Heart right ventricle (tissue), 16 donors: ENCODE measurements at regions of chr7 and their contacts with region 1.

Region 1: DNA sequence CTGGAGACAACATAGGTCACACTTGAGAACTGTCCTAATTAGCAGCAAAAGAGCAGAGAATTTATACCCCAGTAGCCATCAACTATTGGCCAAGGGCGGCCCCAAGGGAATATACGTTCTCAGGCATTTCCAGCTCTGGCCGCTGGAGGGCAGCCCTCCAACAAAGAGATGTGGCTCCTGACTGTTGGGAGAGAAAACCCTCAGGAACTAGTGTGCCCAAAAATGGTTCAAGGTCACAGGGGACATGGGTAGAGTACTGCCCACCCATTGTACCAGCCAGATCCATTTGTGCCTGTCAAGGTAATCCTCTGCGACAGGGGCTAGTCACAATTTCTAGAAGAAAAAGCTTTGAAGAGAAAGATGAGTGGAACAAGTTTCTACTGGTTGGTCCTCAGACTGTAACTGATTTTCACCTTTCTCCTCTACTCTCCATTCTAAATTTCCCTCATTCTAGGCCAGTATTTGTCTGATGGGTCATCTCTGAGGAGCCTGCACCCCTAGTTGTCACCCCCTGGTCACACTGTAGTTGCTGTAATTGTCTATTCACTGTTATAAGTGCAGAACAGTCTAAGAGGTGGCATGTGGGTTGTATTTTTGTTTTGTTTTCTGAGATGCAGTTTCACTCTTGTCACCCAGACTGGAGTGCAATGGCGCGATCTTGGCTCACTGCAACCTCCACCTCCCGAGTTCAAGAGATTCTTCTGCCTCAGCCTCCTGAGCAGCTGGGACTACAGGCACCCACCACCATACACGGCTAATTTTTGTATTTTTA is 14.7 kb upstream of the C7orf33 start:
- DNase-seq: peak; percentile 47 to 63
- ATAC-seq: peak; percentile 55 to 81 (median 71)
- H3K4me3 ChIP-seq: no peak overlapping the region
- H3K27ac ChIP-seq: no peak overlapping the region
- H3K4me1 ChIP-seq: peaks cover 0 to 6% (median 0%) of the 10 kb centered on the region in 9 donors
- H3K27me3 ChIP-seq: no peaks in the 10 kb centered on the region
- CTCF ChIP-seq: peak; percentile 47 to 87 (median 80)

Region 2: DNA sequence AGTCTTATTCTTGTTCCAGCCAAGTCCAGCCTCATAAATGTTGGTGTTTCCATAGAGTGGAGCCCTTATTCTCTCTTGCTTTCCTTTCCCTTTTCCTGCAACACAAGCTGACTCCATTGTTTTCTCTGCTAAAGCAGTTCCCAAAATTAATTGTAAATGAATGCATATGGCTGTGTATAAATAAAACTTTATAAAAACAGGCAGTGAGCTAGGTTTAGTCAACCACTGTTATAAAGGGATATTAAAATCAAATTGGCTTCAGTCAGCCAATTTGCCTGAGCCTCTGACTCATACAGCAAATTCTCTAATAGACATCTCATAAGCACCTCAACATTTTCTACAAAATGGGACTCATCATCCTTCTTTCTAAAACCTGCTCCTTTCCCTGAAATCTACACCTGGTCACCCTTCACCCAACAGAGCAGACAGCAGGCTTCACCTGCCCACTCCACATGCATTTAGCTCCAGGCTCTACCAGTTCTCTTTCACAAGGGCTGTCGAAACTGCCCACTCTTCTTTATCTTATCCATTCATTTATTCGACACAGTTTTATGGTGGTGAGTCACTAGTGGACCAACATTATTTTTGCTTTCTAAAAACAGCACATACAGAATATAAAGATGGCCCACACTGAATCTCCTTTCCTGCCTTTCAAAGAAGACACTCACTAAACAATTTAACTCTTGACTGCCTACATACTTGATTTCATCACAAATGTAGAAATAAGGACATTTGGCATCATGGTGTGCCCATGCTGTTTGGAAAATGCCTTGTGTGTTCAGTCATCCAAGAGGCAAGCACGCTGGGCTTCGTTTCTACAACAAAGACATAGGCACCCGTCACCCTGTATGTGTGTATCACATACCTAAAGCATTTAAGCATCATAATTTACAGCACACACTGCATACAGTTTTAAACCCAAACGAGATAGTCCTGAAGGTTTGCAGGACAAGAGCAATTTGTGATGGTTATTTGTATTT is 59.8 kb before region 1 on chr7:
- intact Hi-C with region 1: no loop called
- DNase-seq: no peak
- ATAC-seq: no peak
- H3K4me3 ChIP-seq: no peak overlapping the region
- H3K27ac ChIP-seq: no peak overlapping the region
- H3K4me1 ChIP-seq: no peaks in the 10 kb centered on the region
- H3K27me3 ChIP-seq: peaks cover 0 to 35% (median 13%) of the 10 kb centered on the region in 7 donors
- CTCF ChIP-seq: no peak

Region 3: DNA sequence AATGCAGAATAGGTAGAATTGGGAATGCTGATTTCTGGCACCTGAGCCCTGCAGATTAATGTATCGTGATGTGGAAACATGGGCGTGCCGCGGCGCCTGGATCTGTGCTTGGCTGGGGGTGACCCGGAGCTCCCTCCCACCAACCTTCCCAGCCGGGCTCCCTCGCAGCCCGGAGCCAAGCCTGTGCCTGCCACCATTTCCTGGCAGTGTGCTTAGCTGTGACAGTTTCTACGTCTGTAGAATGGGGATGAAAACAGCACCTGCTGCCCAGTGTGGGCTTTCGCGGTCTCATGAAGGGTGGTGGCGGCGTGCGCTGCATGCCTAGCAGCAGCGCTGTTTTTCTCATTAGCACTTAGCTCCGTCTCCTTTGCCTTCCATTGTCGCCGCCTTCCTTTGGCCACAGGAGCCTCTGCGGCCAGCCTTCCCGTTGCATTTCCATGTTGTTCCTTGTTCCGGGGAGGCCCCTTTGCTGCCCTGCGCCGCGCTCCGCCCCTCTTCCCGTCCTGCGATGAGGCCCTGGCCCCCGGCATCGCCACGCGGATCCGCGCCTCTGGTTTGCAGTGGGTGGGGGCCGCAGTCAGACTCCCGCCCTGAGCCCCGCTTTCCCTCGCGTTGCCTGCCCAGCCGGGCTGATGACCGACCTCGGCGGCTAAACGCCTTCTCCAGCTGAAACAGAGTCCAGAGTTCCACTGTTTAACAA is 207.1 kb after region 1 on chr7:
- intact Hi-C with region 1: loop called in 1 of 10 experiments (anchors 10 kb)
- DNase-seq: no peak
- ATAC-seq: peak in 3 of 8 donors; percentile 18 to 44 (median 22)
- H3K4me3 ChIP-seq: peak overlapping the region in 1 of 10 donors; percentile 20
- H3K27ac ChIP-seq: no peak overlapping the region
- H3K4me1 ChIP-seq: peaks cover 0 to 6% (median 0%) of the 10 kb centered on the region in 9 donors
- H3K27me3 ChIP-seq: no peaks in the 10 kb centered on the region
- CTCF ChIP-seq: no peak

Region 4: DNA sequence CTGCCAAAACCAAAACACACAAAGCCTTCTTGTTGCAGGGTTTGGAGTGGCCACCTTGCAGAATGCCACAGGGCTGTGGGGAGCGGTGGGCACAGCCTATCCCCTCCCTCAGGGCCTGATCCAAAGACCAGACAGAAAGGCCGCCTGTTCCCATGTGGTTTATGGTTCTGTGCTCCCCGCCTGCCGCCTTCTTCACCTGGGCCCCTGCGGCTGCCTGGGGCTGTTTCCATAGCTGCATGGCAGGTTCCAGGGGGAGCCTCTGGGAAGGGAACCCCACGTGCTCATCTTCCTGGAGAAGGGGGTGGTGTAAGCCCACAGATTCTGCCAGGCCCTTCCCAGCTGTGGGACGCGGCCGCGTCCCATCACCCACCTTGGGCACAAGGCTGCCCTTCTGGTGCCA is 378.9 kb after region 1 on chr7:
- intact Hi-C with region 1: loop called in 1 of 10 experiments (anchors 10 kb)
- DNase-seq: no peak
- ATAC-seq: no peak
- H3K4me3 ChIP-seq: no peak overlapping the region
- H3K27ac ChIP-seq: no peak overlapping the region
- H3K4me1 ChIP-seq: no peaks in the 10 kb centered on the region
- H3K27me3 ChIP-seq: no peaks in the 10 kb centered on the region
- CTCF ChIP-seq: no peak

Region 5: GRCh38 chr7:148975896-148976295 is 400.1 kb after region 1 on chr7:
- intact Hi-C with region 1: no loop called
- DNase-seq: no peak
- ATAC-seq: no peak
- H3K4me3 ChIP-seq: no peak overlapping the region
- H3K27ac ChIP-seq: no peak overlapping the region
- H3K4me1 ChIP-seq: no peaks in the 10 kb centered on the region
- H3K27me3 ChIP-seq: peaks cover 0 to 27% (median 5%) of the 10 kb centered on the region in 7 donors
- CTCF ChIP-seq: no peak